HepG2 (cell line): ENCODE measurements at regions of chr15 and their contacts with region 1.

Region 1: GRCh38 chr15:81274931-81275707 is 48.8 kb downstream of the STARD5 start:
- DNase-seq: peak; percentile 63
- ATAC-seq: peak; percentile 91
- H3K4me3 ChIP-seq: no peak overlapping the region
- H3K27ac ChIP-seq: no peak overlapping the region
- H3K4me1 ChIP-seq: no peaks in the 10 kb centered on the region
- H3K27me3 ChIP-seq: no peaks in the 10 kb centered on the region
- CTCF ChIP-seq: peak; percentile 90
- EP300 ChIP-seq: no peak
- POLR2A ChIP-seq: no peak
- RAD21 ChIP-seq: peak; percentile 64; the same call in 1 of the 2 replicates

Region 2: GRCh38 chr15:80760960-80761359 is 514.2 kb before region 1 on chr15:
- CTCF ChIA-PET with region 1: no interaction called
- POLR2A ChIA-PET with region 1: no interaction called
- in situ Hi-C with region 1: no loop called
- intact Hi-C with region 1: no loop called
- DNase-seq: no peak
- ATAC-seq: no peak
- H3K4me3 ChIP-seq: no peak overlapping the region
- H3K27ac ChIP-seq: no peak overlapping the region
- H3K4me1 ChIP-seq: no peaks in the 10 kb centered on the region
- H3K27me3 ChIP-seq: no peaks in the 10 kb centered on the region
- CTCF ChIP-seq: no peak
- EP300 ChIP-seq: no peak
- POLR2A ChIP-seq: no peak
- RAD21 ChIP-seq: no peak

Region 3: DNA sequence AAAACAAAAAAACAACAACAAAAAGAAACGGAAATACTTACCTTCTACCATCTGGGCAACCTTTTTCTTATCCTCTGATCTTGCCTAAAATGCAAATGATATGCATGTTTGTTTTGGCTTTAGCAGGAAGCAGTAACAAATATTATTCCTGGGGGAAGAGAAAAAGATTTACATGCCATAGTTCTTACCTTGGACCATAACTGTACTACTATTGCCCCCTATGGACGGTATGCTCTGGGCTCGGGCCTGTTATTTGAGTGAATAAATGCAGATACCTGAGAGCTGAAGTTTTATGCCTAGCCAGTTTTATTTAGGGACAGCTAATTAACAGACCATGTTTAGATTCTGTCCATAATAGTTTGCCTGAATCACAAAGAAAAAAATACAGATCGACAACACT is 61.4 kb after region 1 on chr15:
- CTCF ChIA-PET with region 1: interaction called, 11 read pairs
- POLR2A ChIA-PET with region 1: no interaction called
- in situ Hi-C with region 1: no loop called
- intact Hi-C with region 1: loop called (anchors 1 kb)
- DNase-seq: peak; percentile 12
- ATAC-seq: peak; percentile 68
- H3K4me3 ChIP-seq: no peak overlapping the region
- H3K27ac ChIP-seq: no peak overlapping the region
- H3K4me1 ChIP-seq: no peaks in the 10 kb centered on the region
- H3K27me3 ChIP-seq: no peaks in the 10 kb centered on the region; a peak in 1 of 5 replicates
- CTCF ChIP-seq: peak; percentile 41
- EP300 ChIP-seq: no peak
- POLR2A ChIP-seq: no peak
- RAD21 ChIP-seq: no peak

Region 4: GRCh38 chr15:81400640-81401236 is 125.6 kb after region 1 on chr15:
- CTCF ChIA-PET with region 1: interaction called, 24 read pairs
- POLR2A ChIA-PET with region 1: no interaction called
- in situ Hi-C with region 1: loop called (anchors 5 kb)
- intact Hi-C with region 1: no loop called
- DNase-seq: peak; percentile 21
- ATAC-seq: no peak
- H3K4me3 ChIP-seq: no peak overlapping the region
- H3K27ac ChIP-seq: no peak overlapping the region
- H3K4me1 ChIP-seq: no peaks in the 10 kb centered on the region
- H3K27me3 ChIP-seq: no peaks in the 10 kb centered on the region
- CTCF ChIP-seq: peak; percentile 73
- EP300 ChIP-seq: no peak
- POLR2A ChIP-seq: no peak
- RAD21 ChIP-seq: peak; percentile 33; the same call in 1 of the 2 replicates